Common myeloid progenitor, CD34-positive (primary cell): ENCODE measurements at regions of chr1 and their contacts with region 1.

Region 1: GRCh38 chr1:116485071-116485735 is 85.6 kb downstream of the CD58 start:
- DNase-seq: peak; percentile 82 to 91 (median 86)
- H3K4me3 ChIP-seq: no peak overlapping the region
- H3K27ac ChIP-seq: no peak overlapping the region
- H3K4me1 ChIP-seq: peaks cover 2 to 8% (median 5%) of the 10 kb centered on the region in 4 experiments
- H3K27me3 ChIP-seq: no peaks in the 10 kb centered on the region

Region 2: GRCh38 chr1:116151739-116152576 is 333.2 kb before region 1 on chr1:
- CTCF ChIA-PET with region 1: interaction called, 123 read pairs
- POLR2A ChIA-PET with region 1: no interaction called
- DNase-seq: peak; percentile 77 to 90 (median 89)
- H3K4me3 ChIP-seq: peak overlapping the region; percentile 35 to 77 (median 59)
- H3K27ac ChIP-seq: no peak overlapping the region
- H3K4me1 ChIP-seq: peaks cover 0 to 7% (median 4%) of the 10 kb centered on the region in 4 experiments
- H3K27me3 ChIP-seq: peaks cover 0 to 3% (median 0%) of the 10 kb centered on the region in 5 experiments

Region 3: DNA sequence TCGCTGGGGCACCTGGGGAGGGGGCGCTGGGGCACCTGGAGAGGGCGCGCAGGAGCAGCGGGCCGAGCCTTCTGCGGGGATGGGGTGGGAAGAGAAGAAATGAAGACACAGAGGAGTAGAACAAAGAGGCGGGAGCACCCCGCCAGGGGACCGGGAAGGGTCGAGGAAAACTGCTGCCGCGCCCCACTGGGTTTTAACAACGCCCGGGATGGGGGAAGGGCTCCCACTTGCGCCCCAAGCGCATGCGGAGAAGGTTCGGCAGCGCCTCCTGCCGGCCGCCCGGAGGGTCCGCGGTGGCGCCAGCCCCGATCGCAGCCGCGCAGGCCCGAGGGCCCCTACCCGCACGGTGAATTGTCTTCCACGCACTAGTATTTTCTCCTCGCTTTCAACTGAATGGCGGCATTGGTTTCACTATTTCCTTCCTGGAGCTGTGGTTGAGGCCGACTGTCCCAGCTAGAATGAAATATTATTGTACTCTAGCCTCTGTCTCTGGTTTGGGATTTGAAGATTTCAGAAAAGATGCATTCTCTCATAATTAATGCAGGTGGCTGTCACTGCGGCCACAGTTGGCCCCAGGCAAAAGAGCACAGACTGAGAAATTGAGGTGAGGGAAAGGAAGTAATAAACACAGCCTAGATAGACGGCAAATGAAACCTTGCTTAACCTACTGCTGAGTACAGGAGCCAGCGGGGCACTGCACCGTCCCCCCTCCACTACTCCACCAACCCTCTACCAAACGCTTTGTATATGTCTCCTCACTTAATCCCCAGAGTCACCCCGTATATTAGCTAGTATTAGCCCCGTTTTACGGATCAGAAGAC is 316.7 kb before region 1 on chr1:
- CTCF ChIA-PET with region 1: interaction called, 22 read pairs
- POLR2A ChIA-PET with region 1: no interaction called
- DNase-seq: peak; percentile 80 to 89 (median 89)
- H3K4me3 ChIP-seq: peak overlapping the region; percentile 37 to 85 (median 66)
- H3K27ac ChIP-seq: no peak overlapping the region
- H3K4me1 ChIP-seq: peaks cover 6 to 36% (median 22%) of the 10 kb centered on the region in 4 experiments
- H3K27me3 ChIP-seq: no peaks in the 10 kb centered on the region

Region 4: DNA sequence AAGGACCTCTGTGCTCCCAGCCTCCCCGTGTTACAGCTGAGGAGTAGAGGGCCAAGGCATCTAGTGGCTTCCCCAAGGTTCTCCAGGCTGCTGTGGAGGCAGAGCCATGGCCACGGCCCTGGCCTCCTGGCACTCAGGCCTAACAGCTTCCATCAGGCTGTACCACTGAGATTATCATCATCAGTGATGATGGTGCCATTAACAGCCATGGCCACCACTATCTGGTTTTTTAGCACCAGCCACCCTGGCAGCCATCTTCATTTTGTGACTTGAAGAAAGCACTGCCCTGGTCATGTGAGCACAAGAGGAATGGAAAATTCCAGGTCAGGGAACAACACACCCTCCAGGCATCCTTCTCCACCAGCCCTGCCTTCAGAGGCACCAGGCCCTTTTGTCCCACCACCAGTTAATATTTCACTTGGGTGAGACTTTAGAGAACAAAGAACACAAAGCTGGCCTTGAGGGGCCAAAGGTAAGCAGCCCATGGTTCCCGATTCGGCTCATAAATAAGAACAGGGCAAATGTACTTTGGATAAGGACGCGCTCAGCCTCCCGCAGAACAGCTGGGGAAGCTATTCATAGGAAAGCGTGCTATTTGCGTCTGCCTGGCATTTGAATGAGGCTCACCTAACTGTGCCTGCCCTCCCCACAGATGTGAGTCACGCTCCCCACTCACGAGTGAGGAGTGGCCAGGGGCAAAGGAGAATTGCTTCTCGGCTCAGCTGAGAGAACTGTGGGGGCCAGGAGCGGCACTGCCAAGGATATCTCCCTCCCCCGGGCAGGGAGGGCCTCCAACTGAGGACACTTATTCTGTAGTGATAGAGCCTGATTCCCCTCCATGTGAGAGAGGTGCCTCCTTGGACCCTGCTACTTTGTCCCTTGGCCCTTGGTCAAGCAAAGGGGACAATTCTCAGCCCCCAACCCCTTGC is 10.0 kb before region 1 on chr1:
- CTCF ChIA-PET with region 1: interaction called, 16 read pairs
- POLR2A ChIA-PET with region 1: no interaction called
- DNase-seq: no peak
- H3K4me3 ChIP-seq: no peak overlapping the region
- H3K27ac ChIP-seq: no peak overlapping the region
- H3K4me1 ChIP-seq: no peaks in the 10 kb centered on the region
- H3K27me3 ChIP-seq: no peaks in the 10 kb centered on the region

Region 5: GRCh38 chr1:116514708-116515525 is 29.7 kb after region 1 on chr1:
- CTCF ChIA-PET with region 1: interaction called, 24 read pairs
- POLR2A ChIA-PET with region 1: interaction called, 3 read pairs
- DNase-seq: peak; percentile 92 to 98 (median 97)
- H3K4me3 ChIP-seq: peak overlapping the region in 5 of 7 experiments; percentile 12 to 51 (median 38)
- H3K27ac ChIP-seq: peak overlapping the region; percentile 57 to 80
- H3K4me1 ChIP-seq: peaks cover 19 to 56% (median 43%) of the 10 kb centered on the region in 4 experiments
- H3K27me3 ChIP-seq: no peaks in the 10 kb centered on the region